ENCODE measurements at regions of chrX and their contacts with region 1.

Region 1: DNA sequence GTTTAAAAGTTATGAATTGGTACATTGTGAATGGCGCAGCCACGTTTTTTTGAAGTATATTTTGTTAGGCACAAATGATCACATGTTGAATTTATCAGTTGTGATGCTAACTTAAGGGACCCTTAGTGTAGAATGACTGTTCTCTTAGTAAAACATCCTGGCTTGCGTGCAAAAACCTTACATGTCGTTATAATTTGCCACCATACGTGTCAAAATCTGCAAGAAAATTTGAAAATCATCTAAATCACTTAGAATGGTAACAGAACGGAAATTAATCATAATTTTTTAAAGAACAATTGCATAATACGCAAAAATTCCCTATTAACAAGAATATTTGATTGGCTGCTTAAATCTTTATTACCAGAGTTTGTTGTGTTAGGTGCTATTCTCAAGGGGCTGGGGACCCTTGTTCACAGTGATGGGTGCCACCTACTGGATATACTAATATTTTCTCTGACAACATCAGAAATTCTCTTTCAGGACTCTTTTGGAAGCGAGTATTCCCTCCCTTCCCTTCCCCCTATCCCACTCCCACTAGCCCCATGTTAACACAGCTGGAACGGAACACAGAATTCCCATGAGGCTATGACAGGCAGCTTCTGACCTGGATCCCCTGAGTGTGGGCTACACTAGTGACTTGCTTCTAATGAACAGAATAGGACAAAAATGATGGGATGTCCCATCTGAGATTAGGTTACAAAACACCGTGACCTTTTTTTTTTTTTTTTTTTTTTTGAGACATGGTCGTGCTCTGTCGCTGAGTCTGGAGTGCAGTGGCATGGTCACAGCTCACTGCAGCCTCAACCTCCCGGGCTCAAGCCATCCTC is 71.8 kb downstream of the SUPT20HL2 start:
- DNase-seq: no peak
- ATAC-seq: peak; percentile 65

Region 2: DNA sequence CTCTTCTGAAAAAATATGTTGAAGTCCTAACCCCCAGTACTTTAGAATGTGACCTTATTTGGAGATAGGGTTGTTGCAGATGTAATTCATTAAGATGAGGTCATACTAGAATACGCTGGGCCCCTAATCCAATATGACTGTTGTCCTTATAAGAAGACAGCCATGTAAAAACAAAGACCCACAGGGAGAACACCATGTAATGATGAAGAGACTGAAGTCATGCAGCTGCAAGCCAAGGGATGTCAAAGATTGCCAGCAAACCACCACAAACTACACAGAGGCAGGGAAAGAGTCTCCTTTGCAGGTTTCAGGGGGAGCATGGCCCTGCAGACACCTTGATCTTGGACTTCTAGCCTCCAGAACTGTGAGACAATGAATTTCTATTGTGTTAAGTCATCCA is 296.8 kb before region 1 on chrX:
- intact Hi-C with region 1: no loop called
- DNase-seq: no peak
- ATAC-seq: no peak

Region 3: GRCh38 chrX:24081661-24082264 is 160.3 kb before region 1 on chrX:
- intact Hi-C with region 1: loop called (anchors 5 kb)
- DNase-seq: peak; percentile 59
- ATAC-seq: peak; percentile 68

Region 4: GRCh38 chrX:24117258-24117657 is 124.8 kb before region 1 on chrX:
- intact Hi-C with region 1: no loop called
- DNase-seq: no peak
- ATAC-seq: peak; percentile 65